ENCODE measurements at regions of chr7 and their contacts with region 1.

Region 1: GRCh38 chr7:156780724-156781455 is 112.1 kb downstream of the LMBR1 start:
- DNase-seq: no peak
- H3K4me3 ChIP-seq: no peak overlapping the region
- H3K27ac ChIP-seq: peak overlapping the region in 1 of 2 experiments; percentile 96; a peak in 2 of 4 replicates
- H3K4me1 ChIP-seq: peaks cover 0 to 46% of the 10 kb centered on the region in 2 experiments; a peak in 2 of 4 replicates
- H3K27me3 ChIP-seq: no peaks in the 10 kb centered on the region
- CTCF ChIP-seq: no peak
- EP300 ChIP-seq: no peak
- RAD21 ChIP-seq: no peak

Region 2: GRCh38 chr7:156792611-156793010 is 11.7 kb after region 1 on chr7:
- CTCF ChIA-PET with region 1: interaction called, 114 read pairs
- POLR2A ChIA-PET with region 1: interaction called, 13 read pairs
- DNase-seq: peak; percentile 67
- H3K4me3 ChIP-seq: no peak overlapping the region
- H3K27ac ChIP-seq: peak overlapping the region in 1 of 2 experiments; percentile 100; a peak in 2 of 4 replicates
- H3K4me1 ChIP-seq: peaks cover 0 to 66% of the 10 kb centered on the region in 2 experiments; a peak in 2 of 4 replicates
- H3K27me3 ChIP-seq: no peaks in the 10 kb centered on the region
- CTCF ChIP-seq: no peak
- EP300 ChIP-seq: peak in 1 of 2 experiments; percentile 98; a peak in 2 of 4 replicates
- RAD21 ChIP-seq: peak; percentile 25; the same call in 1 of the 2 replicates

Region 3: GRCh38 chr7:157097569-157097968 is 316.7 kb after region 1 on chr7:
- CTCF ChIA-PET with region 1: no interaction called
- POLR2A ChIA-PET with region 1: no interaction called
- DNase-seq: no peak
- H3K4me3 ChIP-seq: no peak overlapping the region
- H3K27ac ChIP-seq: no peak overlapping the region
- H3K4me1 ChIP-seq: no peaks in the 10 kb centered on the region
- H3K27me3 ChIP-seq: peaks cover 24% of the 10 kb centered on the region
- CTCF ChIP-seq: no peak
- EP300 ChIP-seq: no peak
- RAD21 ChIP-seq: no peak